PC-3 (cell line): ENCODE measurements at regions of chr6 and their contacts with region 1.

Region 1: GRCh38 chr6:37819177-37819823 is at the start of gene ZFAND3:
- DNase-seq: peak; percentile 95
- ATAC-seq: peak; percentile 78
- H3K4me3 ChIP-seq: peak within 1 kb of the TSS; percentile 87
- H3K27ac ChIP-seq: peak within 1 kb of the TSS; percentile 81
- H3K4me1 ChIP-seq: peaks cover 36% of the 10 kb centered on the region
- H3K27me3 ChIP-seq: no peaks in the 10 kb centered on the region
- CTCF ChIP-seq: no peak
- total RNA-seq, gene ZFAND3: 22.2 and 23.7 TPM in 2 replicates

Region 2: GRCh38 chr6:36827261-36828079 is 991.8 kb before region 1 on chr6:
- CTCF ChIA-PET with region 1: no interaction called
- POLR2A ChIA-PET with region 1: no interaction called
- intact Hi-C with region 1: no loop called
- DNase-seq: peak; percentile 80
- ATAC-seq: peak; percentile 54
- H3K4me3 ChIP-seq: no peak overlapping the region
- H3K27ac ChIP-seq: no peak overlapping the region
- H3K4me1 ChIP-seq: peaks cover 11% of the 10 kb centered on the region
- H3K27me3 ChIP-seq: no peaks in the 10 kb centered on the region
- CTCF ChIP-seq: no peak

Region 3: GRCh38 chr6:37791156-37791919 is 28.0 kb before region 1 on chr6:
- CTCF ChIA-PET with region 1: interaction called, 6 read pairs
- POLR2A ChIA-PET with region 1: interaction called, 5 read pairs
- intact Hi-C with region 1: loop called (anchors 2 kb)
- DNase-seq: peak; percentile 98
- ATAC-seq: peak; percentile 97
- H3K4me3 ChIP-seq: no peak overlapping the region
- H3K27ac ChIP-seq: no peak overlapping the region
- H3K4me1 ChIP-seq: peaks cover 23% of the 10 kb centered on the region
- H3K27me3 ChIP-seq: no peaks in the 10 kb centered on the region
- CTCF ChIP-seq: peak; percentile 94

Region 4: DNA sequence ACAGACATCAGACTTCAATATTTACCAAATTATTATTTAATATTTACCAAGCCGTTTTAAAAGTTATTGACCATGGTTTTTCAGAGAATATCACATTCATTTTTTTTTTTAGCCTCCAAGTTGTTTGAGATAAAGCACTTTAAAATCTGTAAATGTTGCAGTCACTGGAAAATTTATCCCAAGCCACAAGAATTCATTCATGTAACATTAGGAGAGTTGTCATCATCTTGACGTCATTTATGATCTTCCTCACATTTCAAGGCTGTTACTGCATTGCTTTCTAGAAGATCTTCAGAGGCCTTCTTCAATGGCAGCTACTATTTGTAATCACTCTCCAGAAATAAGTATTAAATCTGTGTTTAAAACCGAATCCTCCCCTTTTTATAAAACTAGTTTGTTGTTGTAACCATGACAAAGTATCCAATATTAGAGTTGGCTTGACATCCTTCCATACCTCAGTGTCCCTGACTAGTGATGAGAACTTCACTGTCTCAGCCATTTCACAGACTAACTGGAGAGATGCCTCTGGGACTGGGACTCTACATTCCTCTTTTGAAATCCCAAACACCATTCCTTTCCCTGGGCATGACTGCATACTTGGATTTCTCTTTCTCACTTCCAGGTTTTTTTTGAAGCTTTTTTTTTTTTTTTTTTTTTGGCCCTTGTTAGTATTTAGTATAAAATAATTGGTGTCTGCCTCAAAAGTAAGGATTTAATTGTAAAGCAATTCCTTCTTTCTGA is 100.3 kb after region 1 on chr6:
- CTCF ChIA-PET with region 1: no interaction called
- POLR2A ChIA-PET with region 1: interaction called, 13 read pairs
- intact Hi-C with region 1: no loop called
- DNase-seq: no peak
- ATAC-seq: no peak
- H3K4me3 ChIP-seq: no peak overlapping the region
- H3K27ac ChIP-seq: no peak overlapping the region
- H3K4me1 ChIP-seq: peaks cover 21% of the 10 kb centered on the region
- H3K27me3 ChIP-seq: no peaks in the 10 kb centered on the region
- CTCF ChIP-seq: no peak